Cardiac septum (tissue), 1 donor: ENCODE measurements at regions of chr5 and their contacts with region 1.

Region 1: GRCh38 chr5:68215208-68215897 is at the start of gene PIK3R1:
- DNase-seq: peak; percentile 98
- total RNA-seq, gene PIK3R1: 166 TPM

Region 2: DNA sequence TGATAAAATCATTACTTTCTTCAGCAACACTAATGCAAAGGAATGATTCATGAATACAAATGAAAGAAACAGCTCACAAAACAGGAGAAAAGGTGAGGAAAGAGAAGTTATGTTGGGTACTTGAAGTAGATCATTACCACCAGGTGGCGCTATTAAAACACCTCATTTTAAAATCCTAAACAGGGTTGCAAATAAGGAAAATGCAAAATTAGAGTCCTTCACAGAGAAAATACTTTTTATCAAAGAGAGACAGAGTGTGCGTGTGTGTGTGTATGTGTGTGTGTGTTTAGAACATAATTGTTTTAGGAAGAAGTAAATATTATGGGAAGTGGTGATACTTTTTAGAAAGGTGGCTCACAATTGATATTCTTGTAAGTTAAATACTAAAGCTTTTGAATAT is 969.2 kb before region 1 on chr5:
- intact Hi-C with region 1: loop called (anchors 10 kb)
- DNase-seq: no peak

Region 3: GRCh38 chr5:67493676-67494075 is 721.7 kb before region 1 on chr5:
- intact Hi-C with region 1: loop called (anchors 10 kb)
- DNase-seq: no peak

Region 4: GRCh38 chr5:67809589-67809988 is 405.8 kb before region 1 on chr5:
- intact Hi-C with region 1: loop called (anchors 1 kb)
- DNase-seq: no peak

Region 5: DNA sequence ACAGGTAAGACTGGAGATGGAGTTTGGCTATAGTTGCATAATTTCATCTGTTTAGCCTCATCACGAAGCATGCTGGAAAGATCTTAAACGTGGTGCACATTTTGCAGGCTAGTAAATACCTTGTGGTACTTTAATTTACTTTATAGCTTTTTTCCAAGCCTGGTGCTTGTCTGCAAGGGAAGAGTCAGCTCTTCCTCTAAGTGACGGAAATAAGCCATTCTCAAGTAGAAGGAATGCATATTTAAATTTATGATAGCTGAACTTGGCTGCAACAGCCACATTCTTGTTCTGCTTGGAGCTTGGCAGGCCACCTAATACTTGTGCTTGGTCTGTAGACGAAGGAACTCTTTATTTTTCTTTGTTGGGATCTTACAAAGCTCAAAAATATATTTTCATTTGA is 187.8 kb before region 1 on chr5:
- intact Hi-C with region 1: loop called (anchors 2 kb)
- DNase-seq: no peak

Region 6: GRCh38 chr5:68898951-68899471 is 683.7 kb after region 1 on chr5:
- intact Hi-C with region 1: no loop called
- DNase-seq: no peak